Activated CD8-positive, alpha-beta T cell treated with anti-CD3 and anti-CD28 coated beads for 36 hours (primary cell): ENCODE measurements at regions of chr5 and their contacts with region 1.

Region 1: DNA sequence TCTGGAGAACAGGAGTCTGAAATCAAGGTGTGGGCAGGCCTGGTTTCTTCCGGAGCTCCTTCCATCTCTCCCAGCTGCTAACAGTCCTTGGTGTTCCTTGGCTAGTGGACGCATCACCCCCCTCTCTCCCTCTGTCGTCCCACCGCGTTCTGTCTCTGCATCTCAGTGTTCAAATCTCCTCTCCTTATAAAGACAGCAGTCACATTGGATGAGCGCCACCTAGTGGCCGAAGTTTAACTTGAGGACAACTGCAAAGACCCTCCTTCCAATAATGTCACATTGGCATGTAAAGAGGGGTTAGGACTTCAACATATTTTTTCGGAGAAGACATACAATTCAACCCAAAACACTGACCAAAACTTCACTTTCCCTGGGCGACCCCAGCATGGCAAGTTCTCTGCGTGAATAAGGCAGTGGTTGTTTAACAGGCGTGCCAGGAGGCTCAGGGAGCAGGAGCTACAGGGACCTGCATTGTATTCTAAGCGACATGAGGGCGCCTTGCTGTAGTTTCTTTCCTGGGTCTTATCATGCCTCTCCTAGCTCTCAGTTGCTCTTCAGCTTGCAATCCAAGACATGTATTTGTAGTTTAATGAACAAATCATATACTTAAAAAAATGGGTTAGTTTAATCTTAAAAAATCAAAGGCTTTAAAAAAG is 27.9 kb upstream of the BASP1 start:
- DNase-seq: peak; percentile 84
- ATAC-seq: no peak
- H3K4me3 Mint-ChIP-seq: no peak overlapping the region
- H3K27ac Mint-ChIP-seq: no peak overlapping the region
- H3K4me1 Mint-ChIP-seq: no peaks in the 10 kb centered on the region
- H3K27me3 Mint-ChIP-seq: peaks cover 8% of the 10 kb centered on the region
- CTCF ChIP-seq: peak; percentile 80

Region 2: GRCh38 chr5:16791036-16791705 is 398.3 kb before region 1 on chr5:
- CTCF ChIA-PET with region 1: interaction called, 23 read pairs
- POLR2A ChIA-PET with region 1: interaction called, 3 read pairs
- intact Hi-C with region 1: loop called (anchors 5 kb)
- DNase-seq: peak; percentile 35
- ATAC-seq: peak; percentile 69
- H3K4me3 Mint-ChIP-seq: no peak overlapping the region
- H3K27ac Mint-ChIP-seq: no peak overlapping the region
- H3K4me1 Mint-ChIP-seq: peaks cover 9% of the 10 kb centered on the region
- H3K27me3 Mint-ChIP-seq: peaks cover 1% of the 10 kb centered on the region
- CTCF ChIP-seq: peak; percentile 84

Region 3: GRCh38 chr5:16934123-16934522 is 255.4 kb before region 1 on chr5:
- CTCF ChIA-PET with region 1: interaction called, 6 read pairs
- POLR2A ChIA-PET with region 1: no interaction called
- intact Hi-C with region 1: loop called (anchors 5 kb)
- DNase-seq: peak; percentile 59
- ATAC-seq: peak; percentile 66
- H3K4me3 Mint-ChIP-seq: no peak overlapping the region
- H3K27ac Mint-ChIP-seq: no peak overlapping the region
- H3K4me1 Mint-ChIP-seq: peaks cover 13% of the 10 kb centered on the region
- H3K27me3 Mint-ChIP-seq: peaks cover 60% of the 10 kb centered on the region
- CTCF ChIP-seq: peak; percentile 83

Region 4: GRCh38 chr5:17157916-17158529 is 31.5 kb before region 1 on chr5:
- CTCF ChIA-PET with region 1: interaction called, 12 read pairs
- POLR2A ChIA-PET with region 1: no interaction called
- intact Hi-C with region 1: no loop called
- DNase-seq: no peak
- ATAC-seq: no peak
- H3K4me3 Mint-ChIP-seq: no peak overlapping the region
- H3K27ac Mint-ChIP-seq: no peak overlapping the region
- H3K4me1 Mint-ChIP-seq: no peaks in the 10 kb centered on the region
- H3K27me3 Mint-ChIP-seq: peaks cover 2% of the 10 kb centered on the region
- CTCF ChIP-seq: no peak

Region 5: GRCh38 chr5:17204133-17204489 is 14.6 kb after region 1 on chr5:
- CTCF ChIA-PET with region 1: interaction called, 14 read pairs
- POLR2A ChIA-PET with region 1: no interaction called
- intact Hi-C with region 1: no loop called
- DNase-seq: no peak
- ATAC-seq: no peak
- H3K4me3 Mint-ChIP-seq: no peak overlapping the region
- H3K27ac Mint-ChIP-seq: no peak overlapping the region
- H3K4me1 Mint-ChIP-seq: no peaks in the 10 kb centered on the region
- H3K27me3 Mint-ChIP-seq: peaks cover 8% of the 10 kb centered on the region
- CTCF ChIP-seq: no peak

Region 6: DNA sequence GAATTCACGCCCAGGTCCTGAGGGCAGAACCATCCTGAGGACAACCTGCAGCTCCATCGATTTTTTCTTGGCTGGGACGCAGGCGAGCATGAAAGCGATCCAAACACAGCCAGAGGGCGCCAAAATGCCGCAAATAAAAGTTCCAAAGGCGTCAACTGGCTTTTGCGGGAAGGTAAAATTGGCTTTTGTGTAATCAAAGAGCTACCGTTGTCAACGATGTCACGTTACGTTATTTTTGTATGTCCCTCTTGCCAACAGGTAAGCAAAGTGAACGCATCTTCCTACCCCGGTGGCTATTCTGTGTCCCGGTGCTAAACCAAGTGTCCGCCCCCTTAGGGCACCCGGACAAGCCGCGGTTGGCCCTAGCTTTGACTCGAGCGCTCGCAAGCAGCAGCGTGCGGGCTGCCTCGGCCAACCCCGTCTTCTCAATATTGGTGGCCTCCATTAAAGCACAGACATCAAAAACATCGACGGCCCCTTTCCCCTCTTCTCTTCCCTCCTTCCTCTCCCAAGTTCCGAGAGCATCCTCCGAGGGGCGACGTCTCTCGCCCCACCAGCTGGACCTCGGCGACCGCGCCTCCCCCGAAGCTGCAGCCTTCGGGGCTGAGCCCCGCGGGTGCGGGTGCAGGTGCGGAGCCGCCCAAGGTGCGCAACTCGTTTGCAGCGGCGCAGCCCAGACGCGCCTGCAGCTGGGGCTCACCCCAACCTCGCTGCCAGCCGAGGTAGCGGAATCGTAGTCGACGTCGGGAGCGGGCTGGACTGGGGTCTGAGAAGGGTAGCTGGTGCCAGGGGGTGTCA is 26.9 kb after region 1 on chr5:
- CTCF ChIA-PET with region 1: interaction called, 14 read pairs
- POLR2A ChIA-PET with region 1: no interaction called
- intact Hi-C with region 1: no loop called
- DNase-seq: peak; percentile 74
- ATAC-seq: no peak
- H3K4me3 Mint-ChIP-seq: peak overlapping the region; percentile 9
- H3K27ac Mint-ChIP-seq: no peak overlapping the region
- H3K4me1 Mint-ChIP-seq: peaks cover 7% of the 10 kb centered on the region
- H3K27me3 Mint-ChIP-seq: peaks cover 41% of the 10 kb centered on the region
- CTCF ChIP-seq: peak; percentile 57